ENCODE measurements at regions of chr10 and their contacts with region 1.

Region 1: GRCh38 chr10:110556969-110557601 is 10.4 kb upstream of the SMC3 start:
- DNase-seq: peak; percentile 26
- H3K4me3 Mint-ChIP-seq: no peak overlapping the region
- H3K27ac Mint-ChIP-seq: no peak overlapping the region
- H3K4me1 Mint-ChIP-seq: peaks cover 5% of the 10 kb centered on the region
- H3K27me3 Mint-ChIP-seq: peaks cover 47% of the 10 kb centered on the region

Region 2: DNA sequence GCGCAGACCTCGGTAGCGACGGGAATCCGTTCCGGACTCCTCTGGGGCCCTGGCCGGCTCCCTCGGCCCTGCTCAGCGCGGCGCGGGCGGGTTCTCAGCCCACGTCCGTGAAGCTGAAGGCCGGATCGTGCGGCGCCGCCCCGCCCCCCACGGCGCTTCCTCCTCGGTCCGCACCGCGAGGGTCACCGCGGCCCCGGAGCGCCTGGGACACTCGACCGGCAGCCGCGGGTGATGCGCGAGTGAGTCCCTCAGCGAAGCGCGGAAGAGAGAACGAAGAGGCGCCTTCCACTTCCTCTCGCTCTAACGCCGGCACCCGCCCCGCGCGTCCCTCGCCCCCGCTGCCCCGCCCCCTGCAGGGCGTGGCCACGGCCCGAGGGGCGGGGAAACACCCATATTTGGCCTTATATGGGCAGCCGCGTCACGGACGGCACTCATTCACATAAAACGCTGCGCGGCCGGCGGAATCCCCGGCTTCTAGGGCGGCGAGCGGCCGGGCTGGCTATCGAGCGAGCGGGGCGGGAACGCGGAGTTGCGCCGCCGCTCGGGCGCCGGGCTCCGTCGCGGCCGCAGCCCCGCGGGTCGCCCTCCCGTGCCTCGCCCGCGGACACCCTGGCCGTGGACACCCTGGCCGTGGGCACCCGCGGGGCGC is 59.5 kb before region 1 on chr10 and contains the start of gene DUSP5:
- intact Hi-C with region 1: no loop called
- DNase-seq: peak; percentile 96
- H3K4me3 Mint-ChIP-seq: peak within 1 kb of the TSS; percentile 100
- H3K27ac Mint-ChIP-seq: peak within 1 kb of the TSS; percentile 97
- H3K4me1 Mint-ChIP-seq: peaks cover 62% of the 10 kb centered on the region
- H3K27me3 Mint-ChIP-seq: no peaks in the 10 kb centered on the region
- total RNA-seq, gene DUSP5: 140 and 141 TPM in 2 replicates

Region 3: GRCh38 chr10:110535958-110536891 is 20.9 kb before region 1 on chr10:
- intact Hi-C with region 1: loop called (anchors 1 kb)
- DNase-seq: peak; percentile 49
- H3K4me3 Mint-ChIP-seq: peak overlapping the region; percentile 48
- H3K27ac Mint-ChIP-seq: peak overlapping the region; percentile 89
- H3K4me1 Mint-ChIP-seq: peaks cover 60% of the 10 kb centered on the region
- H3K27me3 Mint-ChIP-seq: no peaks in the 10 kb centered on the region

Region 4: GRCh38 chr10:110600487-110601101 is 43.5 kb after region 1 on chr10:
- intact Hi-C with region 1: loop called (anchors 2 kb)
- DNase-seq: peak; percentile 24
- H3K4me3 Mint-ChIP-seq: no peak overlapping the region
- H3K27ac Mint-ChIP-seq: no peak overlapping the region
- H3K4me1 Mint-ChIP-seq: no peaks in the 10 kb centered on the region
- H3K27me3 Mint-ChIP-seq: no peaks in the 10 kb centered on the region

Region 5: DNA sequence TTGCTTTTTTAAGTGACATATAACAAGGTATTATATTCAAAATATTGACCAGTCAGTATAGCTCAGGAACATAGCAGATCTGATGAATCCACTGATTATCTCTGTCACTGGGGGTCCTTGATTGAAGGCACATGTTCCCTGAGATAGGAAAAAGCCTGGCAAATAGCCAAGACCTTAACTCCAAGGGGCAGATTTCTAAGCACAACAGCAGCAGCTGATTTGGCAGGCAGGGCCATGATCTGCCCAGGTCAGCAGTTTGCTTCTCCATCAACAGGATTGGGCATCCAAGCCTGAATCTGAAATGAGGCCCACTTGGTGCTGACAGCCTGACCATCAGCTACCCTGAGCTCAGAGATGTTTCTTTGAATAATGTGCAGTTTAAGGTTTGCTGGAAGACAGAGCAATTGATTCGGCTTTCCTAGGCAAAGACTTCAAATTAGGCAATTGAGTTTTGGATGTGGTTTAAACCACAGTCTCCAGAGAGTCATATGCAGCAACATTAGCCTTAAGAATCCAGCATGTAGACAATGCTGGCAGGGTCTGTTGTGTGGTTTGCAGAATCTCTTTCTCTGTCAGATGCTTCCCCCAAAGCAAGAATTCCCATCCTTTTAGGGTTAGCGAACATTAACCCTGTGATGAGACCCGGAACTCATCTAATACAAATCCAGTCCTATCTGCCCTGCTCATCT is 872.4 kb after region 1 on chr10:
- intact Hi-C with region 1: no loop called
- DNase-seq: no peak
- H3K4me3 Mint-ChIP-seq: no peak overlapping the region
- H3K27ac Mint-ChIP-seq: no peak overlapping the region
- H3K4me1 Mint-ChIP-seq: no peaks in the 10 kb centered on the region
- H3K27me3 Mint-ChIP-seq: no peaks in the 10 kb centered on the region

Measured in activated T-helper 1 cell treated with anti-CD3 and anti-CD28 coated beads, Interleukin-12 subunit alpha, Interleukin-12 subunit beta, Interleukin-2, Interleukin-4 antibody, amounts not matched to agents 30 ng/mL and 10 ng/mL and 1 ng/mL, durations not matched to agents 14 hours and 24 hours and 36 hours (primary cell).